Dendritic cell treated with granulocyte-macrophage colony-stimulating factor and Interleukin-4, amounts not matched to agents 40 ng/mL and 50 ng/mL, for 4 days (primary cell): ENCODE measurements at regions of chr1 and their contacts with region 1.

Region 1: GRCh38 chr1:24762133-24762676 is 17.0 kb downstream of the CLIC4 start:
- H3K4me3 Mint-ChIP-seq: no peak overlapping the region
- H3K27ac Mint-ChIP-seq: no peak overlapping the region
- H3K4me1 Mint-ChIP-seq: peaks cover 21% of the 10 kb centered on the region
- H3K27me3 Mint-ChIP-seq: no peaks in the 10 kb centered on the region

Region 2: GRCh38 chr1:24468685-24469316 is 293.4 kb before region 1 on chr1:
- intact Hi-C with region 1: no loop called
- H3K4me3 Mint-ChIP-seq: no peak overlapping the region
- H3K27ac Mint-ChIP-seq: no peak overlapping the region
- H3K4me1 Mint-ChIP-seq: peaks cover 29% of the 10 kb centered on the region
- H3K27me3 Mint-ChIP-seq: no peaks in the 10 kb centered on the region

Region 3: DNA sequence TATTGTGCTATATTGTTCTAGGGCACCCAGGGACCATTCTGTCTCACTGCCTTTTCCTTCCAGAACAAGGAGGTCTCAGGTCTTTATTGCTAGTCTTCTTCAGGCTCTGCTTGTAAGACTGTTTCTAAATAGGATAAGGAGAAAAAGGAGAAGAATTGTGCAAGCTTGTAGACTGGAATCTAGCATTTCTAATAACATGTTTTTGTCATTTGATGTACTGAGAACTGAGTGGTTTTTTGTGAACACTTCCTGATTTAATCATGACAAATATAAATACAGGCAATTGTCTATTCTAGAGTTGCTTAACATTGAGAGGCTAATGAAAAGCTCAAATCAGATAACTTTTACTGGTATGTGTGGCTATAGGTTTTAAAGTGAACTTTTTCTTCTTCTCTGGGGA is 60.7 kb after region 1 on chr1:
- intact Hi-C with region 1: loop called (anchors 5 kb)
- H3K4me3 Mint-ChIP-seq: no peak overlapping the region
- H3K27ac Mint-ChIP-seq: peak overlapping the region; percentile 80
- H3K4me1 Mint-ChIP-seq: peaks cover 20% of the 10 kb centered on the region
- H3K27me3 Mint-ChIP-seq: no peaks in the 10 kb centered on the region